ENCODE measurements at regions of chr20 and their contacts with region 1.

Region 1: GRCh38 chr20:5126512-5127203 is at the start of gene CDS2:
- DNase-seq: peak; percentile 97
- ATAC-seq: peak; percentile 93
- H3K4me3 ChIP-seq: peak within 1 kb of the TSS; percentile 92
- H3K27ac ChIP-seq: peak within 1 kb of the TSS; percentile 81
- H3K4me1 ChIP-seq: peaks cover 8% of the 10 kb centered on the region
- H3K27me3 ChIP-seq: no peaks in the 10 kb centered on the region
- CTCF ChIP-seq: peak; percentile 58
- POLR2A ChIP-seq: peak; percentile 47
- RAD21 ChIP-seq: peak; percentile 65
- total RNA-seq, gene CDS2: 47.1 and 57.5 TPM in 2 replicates

Region 2: DNA sequence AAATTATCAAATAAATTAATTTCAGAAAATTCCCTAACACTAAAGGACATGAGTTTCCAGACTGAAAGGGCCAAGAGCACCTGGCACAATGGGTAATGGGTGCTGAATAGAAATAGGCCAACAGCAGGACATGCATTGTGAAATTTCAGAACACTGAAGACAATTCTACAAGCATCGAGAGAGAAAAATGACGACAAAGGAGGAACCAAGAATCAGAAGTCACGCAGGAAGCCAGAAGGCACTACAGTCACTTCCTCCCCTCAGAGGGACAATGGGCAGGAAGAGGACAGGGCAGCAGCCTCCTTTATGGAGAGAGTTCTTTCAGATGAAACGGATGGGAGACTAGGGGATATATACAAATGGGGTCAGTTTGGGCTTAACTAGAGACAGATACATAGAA is 36.5 kb before region 1 on chr20:
- CTCF ChIA-PET with region 1: no interaction called
- POLR2A ChIA-PET with region 1: no interaction called
- dilution Hi-C with region 1: no loop called
- in situ Hi-C with region 1: no loop called
- intact Hi-C with region 1: no loop called
- DNase-seq: no peak
- ATAC-seq: no peak
- H3K4me3 ChIP-seq: no peak overlapping the region
- H3K27ac ChIP-seq: no peak overlapping the region
- H3K4me1 ChIP-seq: no peaks in the 10 kb centered on the region
- H3K27me3 ChIP-seq: no peaks in the 10 kb centered on the region
- CTCF ChIP-seq: no peak
- POLR2A ChIP-seq: no peak
- RAD21 ChIP-seq: no peak

Region 3: DNA sequence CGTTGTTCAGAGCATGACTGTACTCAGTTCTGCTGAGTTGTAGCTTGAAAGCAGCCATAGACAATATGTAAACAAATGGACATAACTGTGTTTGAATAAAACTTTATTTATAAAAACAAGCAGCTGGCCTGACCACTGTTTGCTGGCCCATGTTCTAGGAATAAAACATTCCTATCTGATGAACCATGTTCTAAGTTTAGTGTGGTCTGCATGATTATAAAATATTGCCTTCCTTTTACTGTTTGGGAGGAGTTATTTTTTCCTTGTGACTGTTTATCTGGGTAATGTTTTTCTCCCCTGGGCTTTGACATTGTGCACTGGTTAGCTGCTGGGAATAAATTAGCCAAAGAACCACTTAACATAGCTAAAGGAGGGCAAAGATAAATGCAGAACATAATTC is 55.3 kb after region 1 on chr20:
- CTCF ChIA-PET with region 1: interaction called, 15 read pairs
- POLR2A ChIA-PET with region 1: no interaction called
- dilution Hi-C with region 1: no loop called
- in situ Hi-C with region 1: loop called (anchors 5 kb)
- intact Hi-C with region 1: loop called (anchors 2 kb)
- DNase-seq: peak; percentile 80
- ATAC-seq: peak; percentile 43
- H3K4me3 ChIP-seq: no peak overlapping the region
- H3K27ac ChIP-seq: no peak overlapping the region
- H3K4me1 ChIP-seq: peaks cover 10% of the 10 kb centered on the region
- H3K27me3 ChIP-seq: no peaks in the 10 kb centered on the region
- CTCF ChIP-seq: no peak
- POLR2A ChIP-seq: no peak
- RAD21 ChIP-seq: no peak

Region 4: DNA sequence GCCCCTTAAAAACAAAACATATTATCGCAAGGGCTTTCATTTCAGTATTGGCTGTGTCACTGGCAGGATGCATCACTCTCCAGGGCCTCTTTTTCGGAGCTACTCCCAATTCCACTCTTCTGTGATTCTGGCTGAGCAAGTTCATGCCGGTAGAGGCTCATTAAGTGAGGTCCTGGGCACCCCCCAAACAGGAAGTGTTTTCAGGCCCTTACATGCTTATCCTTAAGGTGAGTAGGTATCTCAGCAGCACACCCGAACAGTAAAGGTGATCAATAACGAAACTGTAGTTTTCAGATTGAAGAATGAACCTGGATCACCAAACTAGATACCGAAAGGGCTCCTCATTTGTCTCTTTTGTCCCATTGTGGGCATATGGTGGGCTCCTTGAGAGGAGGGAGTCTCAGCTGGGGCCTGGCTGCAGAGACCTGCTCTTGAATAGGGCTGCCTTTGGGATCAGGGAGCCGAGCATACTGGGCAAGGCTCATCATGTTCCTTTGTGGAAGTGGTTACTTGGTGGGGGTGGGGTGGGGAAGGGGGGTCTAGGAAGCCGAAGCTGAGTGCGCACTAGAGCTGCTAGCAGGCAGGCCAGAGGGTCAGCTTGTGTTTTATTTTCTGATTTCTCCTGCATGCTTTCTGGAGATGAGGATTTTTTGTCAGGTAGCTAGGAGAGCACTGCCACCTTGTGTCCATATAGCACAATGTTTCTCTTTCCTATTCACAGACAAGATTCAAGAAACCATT is 65.3 kb after region 1 on chr20:
- CTCF ChIA-PET with region 1: interaction called, 36 read pairs
- POLR2A ChIA-PET with region 1: interaction called, 10 read pairs
- dilution Hi-C with region 1: no loop called
- in situ Hi-C with region 1: loop called (anchors 5 kb)
- intact Hi-C with region 1: loop called (anchors 1 kb)
- DNase-seq: peak; percentile 83
- ATAC-seq: peak; percentile 91
- H3K4me3 ChIP-seq: no peak overlapping the region
- H3K27ac ChIP-seq: peak overlapping the region; percentile 15; the same call in 1 of the 2 replicates
- H3K4me1 ChIP-seq: peaks cover 7% of the 10 kb centered on the region
- H3K27me3 ChIP-seq: no peaks in the 10 kb centered on the region
- CTCF ChIP-seq: peak; percentile 91
- POLR2A ChIP-seq: 0 out of 2 replicates have a peak, but pooled peaks have one; percentile 33
- RAD21 ChIP-seq: peak; percentile 94

Region 5: GRCh38 chr20:5222919-5223634 is 96.4 kb after region 1 on chr20:
- CTCF ChIA-PET with region 1: interaction called, 16 read pairs
- POLR2A ChIA-PET with region 1: no interaction called
- dilution Hi-C with region 1: no loop called
- in situ Hi-C with region 1: no loop called
- intact Hi-C with region 1: no loop called
- DNase-seq: peak; percentile 69
- ATAC-seq: peak; percentile 92
- H3K4me3 ChIP-seq: no peak overlapping the region
- H3K27ac ChIP-seq: no peak overlapping the region
- H3K4me1 ChIP-seq: no peaks in the 10 kb centered on the region
- H3K27me3 ChIP-seq: no peaks in the 10 kb centered on the region; the same call in 1 of the 2 replicates
- CTCF ChIP-seq: peak; percentile 94
- POLR2A ChIP-seq: no peak
- RAD21 ChIP-seq: peak; percentile 81

Region 6: DNA sequence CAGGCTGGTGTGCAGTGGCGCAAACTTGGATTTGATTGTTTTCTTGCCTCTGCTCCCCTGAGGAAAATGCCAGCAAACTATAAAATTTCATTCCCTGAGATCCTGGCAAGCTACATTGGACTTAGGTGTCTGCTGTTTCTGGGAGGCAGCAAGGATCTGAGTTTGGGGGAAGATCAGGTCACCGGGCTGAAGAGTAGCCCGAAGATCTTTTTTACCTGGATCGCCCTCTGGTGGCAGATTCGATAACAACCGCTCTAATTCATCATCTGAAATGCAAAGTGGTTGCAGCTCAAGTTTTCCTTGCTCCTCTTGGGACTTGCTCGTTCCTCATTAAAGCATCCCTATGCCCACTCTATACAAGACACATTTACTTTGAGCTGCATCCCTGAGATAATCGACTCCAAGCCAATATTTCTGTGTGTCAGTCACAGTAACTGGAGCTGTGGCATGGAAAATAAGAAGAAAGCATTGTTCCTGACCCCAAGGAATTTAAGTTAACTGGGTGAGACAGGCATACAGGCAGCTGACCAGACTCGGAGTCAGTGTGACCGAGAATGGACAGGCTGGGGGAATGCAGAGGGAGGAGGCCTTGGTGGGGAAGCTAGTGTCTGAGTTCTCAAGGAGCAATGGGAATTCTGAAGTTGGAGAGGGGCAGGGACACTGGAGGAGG is 321.9 kb after region 1 on chr20:
- CTCF ChIA-PET with region 1: interaction called, 10 read pairs
- POLR2A ChIA-PET with region 1: no interaction called
- dilution Hi-C with region 1: no loop called
- in situ Hi-C with region 1: no loop called
- intact Hi-C with region 1: loop called (anchors 10 kb)
- DNase-seq: peak; percentile 28
- ATAC-seq: peak; percentile 72
- H3K4me3 ChIP-seq: no peak overlapping the region
- H3K27ac ChIP-seq: no peak overlapping the region
- H3K4me1 ChIP-seq: no peaks in the 10 kb centered on the region
- H3K27me3 ChIP-seq: peaks cover 5% of the 10 kb centered on the region; the same call in 1 of the 2 replicates
- CTCF ChIP-seq: peak; percentile 59
- POLR2A ChIP-seq: no peak
- RAD21 ChIP-seq: peak; percentile 49

Measured in IMR-90 (cell line).